K562 (cell line): ENCODE measurements at regions of chr4 and their contacts with region 1.

Region 1: GRCh38 chr4:157978680-157979361 is 194.0 kb downstream of the GASK1B start:
- DNase-seq: peak; percentile 50 to 61 (median 58)
- ATAC-seq: peak; percentile 91
- H3K4me3 ChIP-seq: no peak overlapping the region
- H3K27ac ChIP-seq: no peak overlapping the region
- H3K4me1 ChIP-seq: no peaks in the 10 kb centered on the region
- H3K27me3 ChIP-seq: no peaks in the 10 kb centered on the region
- CTCF ChIP-seq: peak; percentile 55 to 73 (median 66)
- EP300 ChIP-seq: no peak
- POLR2A ChIP-seq: no peak
- RAD21 ChIP-seq: peak; percentile 71 to 76

Region 2: GRCh38 chr4:156534205-156534604 is 1444.6 kb before region 1 on chr4:
- CTCF ChIA-PET with region 1: no interaction called
- POLR2A ChIA-PET with region 1: no interaction called
- in situ Hi-C with region 1: no loop called
- intact Hi-C with region 1: loop called (anchors 5 kb)
- DNase-seq: no peak
- ATAC-seq: no peak
- H3K4me3 ChIP-seq: no peak overlapping the region
- H3K27ac ChIP-seq: no peak overlapping the region
- H3K4me1 ChIP-seq: no peaks in the 10 kb centered on the region
- H3K27me3 ChIP-seq: no peaks in the 10 kb centered on the region
- CTCF ChIP-seq: no peak
- EP300 ChIP-seq: no peak
- POLR2A ChIP-seq: no peak
- RAD21 ChIP-seq: no peak

Region 3: DNA sequence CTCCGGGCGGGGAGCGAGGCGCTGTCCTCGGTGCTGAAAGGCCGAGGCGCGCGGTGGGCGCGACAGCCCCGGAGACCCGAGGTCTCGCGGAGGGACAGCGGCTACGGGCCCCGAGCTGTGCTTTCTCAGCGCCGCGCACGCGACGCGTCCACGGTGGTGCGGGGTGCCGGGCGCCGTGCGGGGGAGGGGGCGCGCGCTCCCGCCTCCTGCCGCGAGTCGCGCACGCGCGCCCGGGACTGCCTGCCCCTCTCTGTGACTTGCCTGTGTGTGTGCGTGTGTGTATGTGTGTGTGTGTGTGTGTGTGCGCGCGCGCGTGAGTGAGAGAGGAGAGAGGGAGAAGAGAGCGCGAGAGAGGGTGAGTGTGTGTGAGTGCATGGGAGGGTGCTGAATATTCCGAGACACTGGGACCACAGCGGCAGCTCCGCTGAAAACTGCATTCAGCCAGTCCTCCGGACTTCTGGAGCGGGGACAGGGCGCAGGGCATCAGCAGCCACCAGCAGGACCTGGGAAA is 758.4 kb before region 1 on chr4 and contains the start of gene GRIA2:
- CTCF ChIA-PET with region 1: no interaction called
- POLR2A ChIA-PET with region 1: no interaction called
- in situ Hi-C with region 1: loop called (anchors 25 kb)
- intact Hi-C with region 1: loop called (anchors 5 kb)
- DNase-seq: peak; percentile 4 to 14 (median 7)
- ATAC-seq: peak; percentile 42; the same call in 1 of the 3 replicates
- H3K4me3 ChIP-seq: no peak within 1 kb of the TSS
- H3K27ac ChIP-seq: no peak within 1 kb of the TSS
- H3K4me1 ChIP-seq: no peaks in the 10 kb centered on the region
- H3K27me3 ChIP-seq: no peaks in the 10 kb centered on the region
- CTCF ChIP-seq: no peak
- EP300 ChIP-seq: no peak
- POLR2A ChIP-seq: no peak
- RAD21 ChIP-seq: no peak
- polyA plus RNA-seq, gene GRIA2: 0.07 TPM in 1 of 2 experiments, not detected in the other

Region 4: GRCh38 chr4:157964463-157964862 is 14.4 kb before region 1 on chr4:
- CTCF ChIA-PET with region 1: no interaction called
- POLR2A ChIA-PET with region 1: no interaction called
- in situ Hi-C with region 1: no loop called
- intact Hi-C with region 1: no loop called
- DNase-seq: no peak
- ATAC-seq: no peak
- H3K4me3 ChIP-seq: no peak overlapping the region
- H3K27ac ChIP-seq: no peak overlapping the region
- H3K4me1 ChIP-seq: no peaks in the 10 kb centered on the region
- H3K27me3 ChIP-seq: no peaks in the 10 kb centered on the region
- CTCF ChIP-seq: no peak
- EP300 ChIP-seq: no peak
- POLR2A ChIP-seq: no peak
- RAD21 ChIP-seq: no peak

Region 5: DNA sequence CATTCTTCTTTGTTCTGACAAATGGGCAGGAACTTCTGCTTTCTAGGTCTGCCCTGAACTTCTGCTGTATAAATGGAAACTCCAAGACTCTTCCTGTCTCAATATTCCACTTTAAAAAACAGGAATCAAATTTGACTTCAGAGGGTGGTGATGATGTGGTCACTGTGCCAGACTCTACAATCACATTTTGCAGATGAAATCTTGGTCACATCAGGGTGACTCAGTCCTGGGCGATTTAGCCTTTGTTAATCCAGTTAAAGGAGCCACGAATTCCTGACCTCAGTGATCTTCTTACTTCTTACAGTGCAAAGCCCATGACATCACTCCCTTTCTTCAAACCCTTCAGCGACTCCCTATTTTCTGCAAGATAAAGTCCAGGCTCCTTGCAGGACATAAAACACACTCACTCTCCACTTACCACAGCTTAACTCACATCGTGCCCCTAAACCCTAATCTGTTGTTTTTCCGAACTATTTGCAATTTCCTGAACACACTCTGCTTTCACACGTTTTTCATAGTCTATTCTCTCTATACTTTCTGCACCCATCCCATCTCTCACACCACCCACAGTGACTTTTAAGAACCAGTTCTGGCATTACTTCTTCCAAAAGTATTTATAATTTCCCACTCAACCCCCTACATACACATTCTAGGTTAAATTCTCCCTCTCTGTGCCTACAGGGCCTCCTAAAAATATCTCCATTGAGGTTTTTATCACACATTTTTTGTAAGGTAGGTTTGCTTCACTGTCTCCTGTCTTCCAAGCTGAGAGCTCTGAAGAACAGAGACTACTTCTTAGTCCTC is 182.9 kb after region 1 on chr4:
- CTCF ChIA-PET with region 1: no interaction called
- POLR2A ChIA-PET with region 1: no interaction called
- in situ Hi-C with region 1: loop called (anchors 10 kb)
- intact Hi-C with region 1: no loop called
- DNase-seq: no peak
- ATAC-seq: no peak
- H3K4me3 ChIP-seq: no peak overlapping the region
- H3K27ac ChIP-seq: no peak overlapping the region
- H3K4me1 ChIP-seq: no peaks in the 10 kb centered on the region
- H3K27me3 ChIP-seq: no peaks in the 10 kb centered on the region
- CTCF ChIP-seq: no peak
- EP300 ChIP-seq: no peak
- POLR2A ChIP-seq: no peak
- RAD21 ChIP-seq: no peak

Region 6: GRCh38 chr4:158253350-158253980 is 274.6 kb after region 1 on chr4:
- CTCF ChIA-PET with region 1: no interaction called
- POLR2A ChIA-PET with region 1: no interaction called
- in situ Hi-C with region 1: loop called (anchors 25 kb)
- intact Hi-C with region 1: no loop called
- DNase-seq: peak in 2 of 4 experiments; percentile 38 to 69
- ATAC-seq: peak; percentile 94
- H3K4me3 ChIP-seq: no peak overlapping the region
- H3K27ac ChIP-seq: no peak overlapping the region
- H3K4me1 ChIP-seq: no peaks in the 10 kb centered on the region; a peak in 1 of 5 replicates
- H3K27me3 ChIP-seq: no peaks in the 10 kb centered on the region
- CTCF ChIP-seq: peak; percentile 56 to 70 (median 63); a peak in 5 of 6 replicates
- EP300 ChIP-seq: no peak
- POLR2A ChIP-seq: no peak
- RAD21 ChIP-seq: peak; percentile 58 to 66